Heart left ventricle (tissue), 16 donors: ENCODE measurements at regions of chr12 and their contacts with region 1.

Region 1: GRCh38 chr12:112900299-112901145 is 6.2 kb upstream of the OAS1 start:
- DNase-seq: no peak
- ATAC-seq: no peak
- H3K4me3 ChIP-seq: no peak overlapping the region
- H3K27ac ChIP-seq: no peak overlapping the region
- H3K4me1 ChIP-seq: peaks cover 0 to 12% (median 0%) of the 10 kb centered on the region in 12 donors
- H3K27me3 ChIP-seq: peaks cover 0 to 19% (median 0%) of the 10 kb centered on the region in 9 donors
- CTCF ChIP-seq: peak; percentile 44 to 69 (median 60)
- POLR2A ChIP-seq: no peak

Region 2: GRCh38 chr12:112750971-112751370 is 149.6 kb before region 1 on chr12:
- intact Hi-C with region 1: no loop called
- DNase-seq: no peak
- ATAC-seq: no peak
- H3K4me3 ChIP-seq: no peak overlapping the region
- H3K27ac ChIP-seq: no peak overlapping the region
- H3K4me1 ChIP-seq: no peaks in the 10 kb centered on the region
- H3K27me3 ChIP-seq: peaks cover 0 to 24% (median 0%) of the 10 kb centered on the region in 9 donors
- CTCF ChIP-seq: no peak
- POLR2A ChIP-seq: no peak

Region 3: DNA sequence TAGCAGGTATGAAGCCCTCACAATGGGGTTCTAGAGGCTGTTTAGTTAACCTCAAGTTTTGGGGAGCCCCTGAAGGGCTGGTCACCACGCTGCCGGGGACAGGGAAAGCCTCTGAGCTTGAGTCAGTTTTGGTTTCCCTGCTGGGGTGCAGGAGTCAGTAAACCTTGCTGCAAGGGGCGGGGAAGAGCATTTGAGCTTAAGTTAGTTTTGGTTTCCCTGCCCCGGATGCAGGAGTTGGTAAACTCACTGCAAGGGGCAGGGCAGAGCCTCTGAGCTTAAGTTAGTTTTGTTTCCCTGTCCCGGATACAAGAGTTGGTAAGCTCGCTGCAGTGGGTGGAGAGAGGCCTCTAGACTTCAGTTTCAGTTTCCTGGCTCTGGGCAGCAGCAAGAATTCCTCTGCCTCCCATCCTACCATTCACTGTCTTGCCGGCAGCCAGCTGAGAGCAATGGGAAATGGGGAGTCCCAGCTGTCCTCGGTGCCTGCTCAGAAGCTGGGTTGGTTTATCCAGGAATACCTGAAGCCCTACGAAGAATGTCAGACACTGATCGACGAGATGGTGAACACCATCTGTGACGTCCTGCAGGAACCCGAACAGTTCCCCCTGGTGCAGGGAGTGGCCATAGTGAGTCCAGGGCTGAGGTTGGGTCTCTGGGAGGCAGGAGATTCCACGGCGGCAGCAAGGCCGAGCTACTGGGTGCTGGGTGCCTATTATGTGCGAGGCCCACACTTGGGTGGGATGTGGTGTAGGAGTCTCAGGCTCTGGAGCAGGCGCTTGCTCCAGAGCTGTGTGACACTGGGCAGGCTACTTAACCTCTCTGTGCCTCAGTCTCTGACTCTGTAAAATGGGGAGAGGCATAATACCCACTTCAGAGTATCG is 77.9 kb after region 1 on chr12 and contains the start of gene OAS2:
- intact Hi-C with region 1: loop called in 2 of 10 experiments (anchors 5 to 10 kb)
- DNase-seq: peak; percentile 64 to 76 (median 70)
- ATAC-seq: peak; percentile 88 to 97 (median 94)
- H3K4me3 ChIP-seq: peak within 1 kb of the TSS; percentile 19 to 90 (median 64)
- H3K27ac ChIP-seq: peak within 1 kb of the TSS; percentile 54 to 98 (median 87)
- H3K4me1 ChIP-seq: peaks cover 0 to 40% (median 12%) of the 10 kb centered on the region in 12 donors
- H3K27me3 ChIP-seq: no peaks in the 10 kb centered on the region
- CTCF ChIP-seq: no peak
- POLR2A ChIP-seq: peak in 1 of 2 donors; percentile 54
- total RNA-seq, gene OAS2: 6.0 to 46.1 (median 9.8) TPM

Region 4: DNA sequence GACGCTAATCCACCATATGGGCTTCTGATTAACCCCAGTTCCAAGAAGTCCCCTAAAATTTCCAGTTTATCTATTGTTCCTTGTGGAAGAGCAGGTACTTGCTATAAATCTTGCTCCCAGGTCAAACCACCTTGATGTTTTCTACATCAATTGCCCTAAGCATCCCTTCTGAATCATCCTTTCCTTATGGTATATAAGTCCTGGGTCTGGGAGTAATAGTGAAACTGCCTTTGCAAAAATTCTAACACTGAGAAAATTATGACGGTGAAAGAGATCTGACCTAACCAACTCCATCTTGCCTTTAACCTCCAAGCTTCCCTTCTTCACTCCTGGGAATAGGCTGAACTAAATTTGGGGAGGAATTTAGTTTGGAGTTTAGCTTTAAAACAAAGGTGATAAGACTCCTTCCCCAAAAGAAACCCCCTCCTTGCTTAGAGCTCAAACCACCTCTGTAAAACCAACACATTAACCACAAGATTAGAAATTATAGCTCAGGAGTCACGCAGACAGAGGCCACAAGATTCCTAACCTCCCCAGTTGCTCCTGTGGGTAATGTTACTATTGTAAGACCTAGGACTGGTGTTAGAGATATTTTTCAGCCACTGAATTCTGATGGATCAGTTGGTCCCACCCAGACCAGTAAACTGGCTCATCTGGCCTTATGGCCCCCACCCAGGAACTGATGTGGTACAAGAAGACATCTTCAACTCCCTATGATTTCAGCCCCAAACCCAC is 122.2 kb after region 1 on chr12:
- intact Hi-C with region 1: loop called in 3 of 10 experiments (anchors 5 kb)
- DNase-seq: no peak
- ATAC-seq: no peak
- H3K4me3 ChIP-seq: no peak overlapping the region
- H3K27ac ChIP-seq: no peak overlapping the region
- H3K4me1 ChIP-seq: peaks cover 0 to 3% (median 0%) of the 10 kb centered on the region in 12 donors
- H3K27me3 ChIP-seq: peaks cover 0 to 4% (median 0%) of the 10 kb centered on the region in 9 donors
- CTCF ChIP-seq: no peak
- POLR2A ChIP-seq: no peak

Region 5: GRCh38 chr12:113030875-113031525 is 130.5 kb after region 1 on chr12:
- intact Hi-C with region 1: loop called in 6 of 10 experiments (anchors 2 to 5 kb)
- DNase-seq: no peak
- ATAC-seq: peak in 3 of 4 donors; percentile 55 to 74 (median 61)
- H3K4me3 ChIP-seq: no peak overlapping the region
- H3K27ac ChIP-seq: no peak overlapping the region
- H3K4me1 ChIP-seq: no peaks in the 10 kb centered on the region
- H3K27me3 ChIP-seq: peaks cover 0 to 9% (median 0%) of the 10 kb centered on the region in 9 donors
- CTCF ChIP-seq: peak; percentile 48 to 75 (median 67)
- POLR2A ChIP-seq: no peak